Activated CD4-positive, alpha-beta memory T cell treated with anti-CD3 and anti-CD28 coated beads for 36 hours (primary cell): ENCODE measurements at regions of chr18 and their contacts with region 1.

Region 1: GRCh38 chr18:22831441-22831904 is 101.7 kb upstream of the RBBP8 start:
- DNase-seq: no peak
- H3K4me3 Mint-ChIP-seq: no peak overlapping the region
- H3K27ac Mint-ChIP-seq: no peak overlapping the region
- H3K4me1 Mint-ChIP-seq: peaks cover 1% of the 10 kb centered on the region
- H3K27me3 Mint-ChIP-seq: peaks cover 21% of the 10 kb centered on the region

Region 2: GRCh38 chr18:22694954-22695353 is 136.5 kb before region 1 on chr18:
- CTCF ChIA-PET with region 1: no interaction called
- POLR2A ChIA-PET with region 1: no interaction called
- intact Hi-C with region 1: no loop called
- DNase-seq: no peak
- H3K4me3 Mint-ChIP-seq: no peak overlapping the region
- H3K27ac Mint-ChIP-seq: no peak overlapping the region
- H3K4me1 Mint-ChIP-seq: no peaks in the 10 kb centered on the region
- H3K27me3 Mint-ChIP-seq: peaks cover 2% of the 10 kb centered on the region

Region 3: GRCh38 chr18:22860807-22861206 is 29.3 kb after region 1 on chr18:
- CTCF ChIA-PET with region 1: no interaction called
- POLR2A ChIA-PET with region 1: no interaction called
- intact Hi-C with region 1: no loop called
- DNase-seq: no peak
- H3K4me3 Mint-ChIP-seq: no peak overlapping the region
- H3K27ac Mint-ChIP-seq: no peak overlapping the region
- H3K4me1 Mint-ChIP-seq: peaks cover 4% of the 10 kb centered on the region
- H3K27me3 Mint-ChIP-seq: peaks cover 35% of the 10 kb centered on the region

Region 4: GRCh38 chr18:22872900-22873551 is 41.6 kb after region 1 on chr18:
- CTCF ChIA-PET with region 1: no interaction called
- POLR2A ChIA-PET with region 1: no interaction called
- intact Hi-C with region 1: no loop called
- DNase-seq: no peak
- H3K4me3 Mint-ChIP-seq: peak overlapping the region; percentile 7
- H3K27ac Mint-ChIP-seq: no peak overlapping the region
- H3K4me1 Mint-ChIP-seq: peaks cover 6% of the 10 kb centered on the region
- H3K27me3 Mint-ChIP-seq: peaks cover 5% of the 10 kb centered on the region

Region 5: GRCh38 chr18:22977847-22978701 is 146.6 kb after region 1 on chr18:
- CTCF ChIA-PET with region 1: interaction called, 6 read pairs
- POLR2A ChIA-PET with region 1: no interaction called
- intact Hi-C with region 1: loop called (anchors 10 kb)
- DNase-seq: no peak
- H3K4me3 Mint-ChIP-seq: peak overlapping the region; percentile 30
- H3K27ac Mint-ChIP-seq: peak overlapping the region; percentile 89
- H3K4me1 Mint-ChIP-seq: peaks cover 19% of the 10 kb centered on the region
- H3K27me3 Mint-ChIP-seq: no peaks in the 10 kb centered on the region

Region 6: DNA sequence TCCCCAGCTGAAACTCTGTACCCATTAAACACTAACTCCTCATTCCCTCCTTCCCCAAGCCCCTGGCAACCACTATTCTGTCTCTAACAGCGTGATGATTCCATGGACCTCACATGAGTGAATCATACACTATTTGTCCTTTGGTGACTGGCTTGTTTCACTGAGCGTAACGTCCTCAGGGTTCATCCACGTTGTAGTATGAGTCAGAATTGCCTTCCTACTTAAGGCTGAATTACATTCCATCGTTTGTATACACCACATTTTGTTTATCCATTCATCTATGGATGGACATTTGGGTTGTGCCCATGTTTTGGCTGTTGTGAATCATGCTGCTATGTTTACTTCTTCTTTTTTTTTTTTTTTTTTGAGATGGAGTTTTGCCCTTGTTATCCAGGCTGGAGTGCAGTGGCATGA is 284.2 kb after region 1 on chr18:
- CTCF ChIA-PET with region 1: no interaction called
- POLR2A ChIA-PET with region 1: no interaction called
- intact Hi-C with region 1: no loop called
- DNase-seq: no peak
- H3K4me3 Mint-ChIP-seq: no peak overlapping the region
- H3K27ac Mint-ChIP-seq: no peak overlapping the region
- H3K4me1 Mint-ChIP-seq: peaks cover 9% of the 10 kb centered on the region
- H3K27me3 Mint-ChIP-seq: no peaks in the 10 kb centered on the region